ENCODE measurements at regions of chr11 and their contacts with region 1.

Region 1: GRCh38 chr11:69296890-69297786 is 3.2 kb downstream of the MYEOV start:
- DNase-seq: peak; percentile 97
- H3K4me3 Mint-ChIP-seq: peak overlapping the region; percentile 32
- H3K27ac Mint-ChIP-seq: peak overlapping the region; percentile 81
- H3K4me1 Mint-ChIP-seq: peaks cover 60% of the 10 kb centered on the region
- H3K27me3 Mint-ChIP-seq: no peaks in the 10 kb centered on the region
- CTCF ChIP-seq: no peak

Region 2: DNA sequence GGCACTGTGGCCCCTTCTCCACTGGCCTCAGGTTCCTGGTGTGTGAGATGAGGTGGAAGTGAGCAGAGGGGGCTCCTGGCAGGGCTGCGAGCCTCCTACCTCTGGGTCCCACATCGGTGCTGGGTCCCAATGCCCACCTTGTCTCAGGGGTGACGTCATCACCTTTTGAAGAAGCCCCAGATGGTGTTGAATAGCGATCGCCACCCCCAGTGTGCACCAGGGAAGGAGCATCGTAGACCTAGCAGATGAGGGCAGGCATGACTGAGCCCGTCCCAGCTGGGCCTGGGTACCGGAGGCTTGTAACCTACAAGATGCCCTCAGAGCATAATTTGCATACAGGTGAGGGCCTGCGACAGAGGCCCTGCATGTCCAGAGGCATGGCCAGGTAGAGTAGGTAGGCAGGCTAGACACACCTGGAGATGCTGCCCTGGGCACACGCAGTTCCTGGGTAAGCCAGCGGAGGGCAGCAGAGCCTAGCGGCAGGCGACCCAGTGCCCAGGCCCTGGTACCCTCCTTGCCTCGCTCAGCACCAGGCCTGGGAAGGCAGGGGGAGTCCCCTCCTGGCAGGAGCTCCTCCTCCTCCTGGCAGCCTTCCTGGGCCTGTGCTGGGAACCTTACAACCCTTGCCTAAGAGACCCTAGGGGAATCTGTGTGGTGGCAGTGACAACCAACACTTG is 195.9 kb before region 1 on chr11:
- CTCF ChIA-PET with region 1: interaction called, 3 read pairs
- POLR2A ChIA-PET with region 1: no interaction called
- intact Hi-C with region 1: loop called (anchors 2 kb)
- DNase-seq: peak; percentile 94
- H3K4me3 Mint-ChIP-seq: no peak overlapping the region
- H3K27ac Mint-ChIP-seq: peak overlapping the region; percentile 42
- H3K4me1 Mint-ChIP-seq: peaks cover 6% of the 10 kb centered on the region
- H3K27me3 Mint-ChIP-seq: no peaks in the 10 kb centered on the region
- CTCF ChIP-seq: peak; percentile 100

Region 3: GRCh38 chr11:69131644-69132300 is 165.4 kb before region 1 on chr11:
- CTCF ChIA-PET with region 1: interaction called, 8 read pairs
- POLR2A ChIA-PET with region 1: interaction called, 7 read pairs
- intact Hi-C with region 1: loop called (anchors 2 kb)
- DNase-seq: peak; percentile 84
- H3K4me3 Mint-ChIP-seq: no peak overlapping the region
- H3K27ac Mint-ChIP-seq: no peak overlapping the region
- H3K4me1 Mint-ChIP-seq: no peaks in the 10 kb centered on the region
- H3K27me3 Mint-ChIP-seq: no peaks in the 10 kb centered on the region
- CTCF ChIP-seq: peak; percentile 96

Region 4: GRCh38 chr11:69280994-69281393 is 16.1 kb before region 1 on chr11:
- CTCF ChIA-PET with region 1: interaction called, 10 read pairs
- POLR2A ChIA-PET with region 1: interaction called, 15 read pairs
- intact Hi-C with region 1: loop called (anchors 1 kb)
- DNase-seq: peak; percentile 84
- H3K4me3 Mint-ChIP-seq: peak overlapping the region; percentile 33
- H3K27ac Mint-ChIP-seq: peak overlapping the region; percentile 81
- H3K4me1 Mint-ChIP-seq: no peaks in the 10 kb centered on the region
- H3K27me3 Mint-ChIP-seq: no peaks in the 10 kb centered on the region
- CTCF ChIP-seq: no peak

Region 5: GRCh38 chr11:69443138-69443967 is 146.2 kb after region 1 on chr11:
- CTCF ChIA-PET with region 1: no interaction called
- POLR2A ChIA-PET with region 1: no interaction called
- intact Hi-C with region 1: loop called (anchors 2 kb)
- DNase-seq: peak; percentile 80
- H3K4me3 Mint-ChIP-seq: no peak overlapping the region
- H3K27ac Mint-ChIP-seq: no peak overlapping the region
- H3K4me1 Mint-ChIP-seq: peaks cover 21% of the 10 kb centered on the region
- H3K27me3 Mint-ChIP-seq: no peaks in the 10 kb centered on the region
- CTCF ChIP-seq: no peak